Brain microvascular endothelial cell (primary cell): ENCODE measurements at regions of chr6 and their contacts with region 1.

Region 1: DNA sequence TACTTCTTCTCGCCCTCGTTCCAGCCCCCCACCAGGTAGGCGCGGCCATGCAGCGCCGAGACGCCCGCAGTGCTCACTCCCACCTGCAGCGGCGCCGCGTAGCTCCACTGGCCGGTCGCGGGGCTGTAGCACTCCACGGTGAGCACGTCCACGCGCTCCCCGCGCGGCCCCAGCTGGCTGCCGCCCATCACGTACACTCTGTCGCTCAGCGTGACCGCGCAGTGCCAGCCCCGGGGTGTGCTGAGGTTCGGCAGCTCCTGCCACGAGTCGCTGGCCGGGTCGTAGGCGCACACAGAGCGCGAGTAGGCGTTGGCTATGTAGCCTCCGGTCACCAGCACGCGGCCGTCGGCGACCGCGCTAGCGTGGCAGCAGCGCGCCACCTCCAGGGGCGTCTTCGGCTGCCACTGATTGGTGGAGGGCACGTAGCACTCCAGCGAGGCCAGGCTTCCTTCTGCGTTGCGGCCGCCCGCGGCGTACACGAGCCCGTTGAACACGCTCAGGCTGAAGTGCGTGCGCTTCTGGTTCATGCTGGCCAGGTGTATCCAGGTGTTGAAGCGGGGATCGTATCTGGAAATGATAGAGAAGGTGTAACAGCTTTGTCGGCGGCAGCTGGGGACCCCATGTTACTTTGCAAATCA is 13.7 kb downstream of the KLHL31 start:
- DNase-seq: peak; percentile 27
- H3K4me3 ChIP-seq: peak overlapping the region; percentile 68
- H3K27ac ChIP-seq: no peak overlapping the region
- H3K27me3 ChIP-seq: peaks cover 3% of the 10 kb centered on the region
- CTCF ChIP-seq: peak; percentile 11

Region 2: DNA sequence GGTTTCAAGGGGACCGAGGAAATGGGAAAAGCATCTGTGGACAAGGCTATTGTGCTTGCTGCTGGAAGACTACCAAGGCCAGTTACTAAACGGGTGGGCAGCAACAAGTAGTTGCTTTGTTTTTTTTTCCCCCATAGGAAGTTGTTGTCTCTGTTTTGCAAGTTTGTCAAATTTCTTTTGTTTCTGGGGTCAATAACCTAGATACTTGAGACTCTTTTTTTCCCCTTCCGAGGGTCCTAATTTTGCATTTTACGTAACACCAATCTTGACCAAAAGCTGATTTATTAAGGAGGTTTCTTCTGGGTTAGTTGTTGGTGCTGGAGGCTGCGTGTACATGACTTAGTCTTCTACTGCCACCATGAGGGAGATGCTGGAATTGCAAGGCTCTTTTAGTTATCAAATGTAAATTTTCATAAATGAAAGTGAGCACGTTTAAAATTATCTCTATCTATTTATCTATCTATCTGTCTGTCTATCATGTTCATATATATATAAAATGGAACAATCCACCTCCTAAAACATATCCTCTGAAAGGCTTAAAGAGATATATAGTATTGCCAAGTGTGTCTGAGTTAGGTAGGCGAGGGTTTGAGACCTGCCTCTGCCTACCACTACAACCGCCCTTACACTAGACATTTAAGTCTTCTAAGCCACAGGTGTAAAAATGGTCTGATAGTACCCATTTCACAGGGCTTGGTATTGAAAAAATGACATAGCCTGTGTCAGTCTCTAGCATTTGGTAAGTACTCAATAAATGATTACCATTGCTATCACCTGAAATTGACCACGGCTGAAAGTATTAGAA is 167.2 kb before region 1 on chr6:
- in situ Hi-C with region 1: loop called (anchors 25 kb)
- DNase-seq: peak; percentile 70
- H3K4me3 ChIP-seq: no peak overlapping the region
- H3K27ac ChIP-seq: no peak overlapping the region
- H3K27me3 ChIP-seq: peaks cover 6% of the 10 kb centered on the region
- CTCF ChIP-seq: peak; percentile 89

Region 3: DNA sequence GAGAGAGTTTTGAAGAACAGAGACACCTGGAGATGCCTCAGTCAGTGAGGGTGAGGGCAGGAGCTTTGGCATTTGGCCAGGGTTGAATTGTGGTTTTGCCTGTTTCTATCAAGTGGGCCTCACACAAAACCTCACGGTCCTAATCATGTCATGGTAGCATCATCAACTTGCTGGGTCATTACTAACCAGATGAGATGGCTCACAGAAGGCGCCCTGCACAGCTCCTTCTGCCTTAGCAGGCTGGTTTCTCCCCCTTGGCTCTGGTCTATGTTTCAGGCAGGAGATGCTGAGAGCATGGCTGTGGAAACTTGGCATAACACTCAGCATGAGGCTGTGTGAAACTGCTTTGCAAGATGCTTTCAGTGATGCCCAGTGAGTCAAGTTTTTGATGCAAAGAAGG is 242.2 kb after region 1 on chr6:
- in situ Hi-C with region 1: no loop called
- DNase-seq: no peak
- H3K4me3 ChIP-seq: no peak overlapping the region
- H3K27ac ChIP-seq: no peak overlapping the region
- H3K27me3 ChIP-seq: no peaks in the 10 kb centered on the region
- CTCF ChIP-seq: no peak